A673 (cell line): ENCODE measurements at regions of chr2 and their contacts with region 1.

Region 1: DNA sequence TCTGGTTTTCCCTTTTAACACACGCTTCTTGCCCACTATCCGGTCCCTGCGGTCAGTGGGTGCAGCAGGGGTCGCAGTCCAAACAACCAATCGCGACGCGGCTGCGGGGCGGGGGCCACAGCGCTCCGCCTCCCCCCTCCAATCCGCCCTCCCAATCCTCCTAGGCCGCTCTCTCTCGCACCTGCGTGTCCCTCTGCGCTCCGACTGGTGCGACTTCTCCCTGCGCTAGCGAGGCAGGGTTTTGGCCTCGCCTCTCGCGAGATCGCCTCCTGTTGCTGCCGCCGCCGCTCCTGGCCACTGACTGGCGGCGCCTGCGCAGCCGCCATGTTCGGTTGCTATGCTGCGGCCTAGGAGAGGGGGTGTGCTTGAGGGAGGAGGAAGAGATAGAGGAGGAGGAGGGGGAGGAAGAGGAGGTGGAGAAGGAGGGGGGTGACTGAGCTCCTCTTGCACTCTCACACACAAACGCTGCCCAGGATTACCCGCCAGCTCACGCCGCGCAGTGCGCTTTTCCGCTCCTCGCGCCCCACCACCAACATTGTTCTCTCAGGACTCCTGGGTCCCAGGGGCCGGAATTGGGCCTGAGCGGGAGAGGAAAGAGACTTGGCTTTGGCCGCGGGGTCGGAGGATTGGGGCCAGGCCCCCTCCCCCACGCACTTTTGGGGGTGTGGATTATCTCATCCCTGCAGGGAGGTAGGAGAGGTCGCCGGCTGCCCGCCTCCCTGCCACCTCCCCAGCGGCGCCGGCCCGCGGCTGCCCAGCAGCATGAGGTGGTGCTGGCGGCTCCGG is at the start of gene PTPN4:
- DNase-seq: peak; percentile 99
- H3K4me3 ChIP-seq: peak within 1 kb of the TSS; percentile 84
- H3K27ac ChIP-seq: peak within 1 kb of the TSS; percentile 85
- H3K4me1 ChIP-seq: peaks cover 22% of the 10 kb centered on the region
- H3K27me3 ChIP-seq: no peaks in the 10 kb centered on the region
- CTCF ChIP-seq: no peak
- total RNA-seq, gene PTPN4: 42.2 and 51.5 TPM in 2 replicates

Region 2: DNA sequence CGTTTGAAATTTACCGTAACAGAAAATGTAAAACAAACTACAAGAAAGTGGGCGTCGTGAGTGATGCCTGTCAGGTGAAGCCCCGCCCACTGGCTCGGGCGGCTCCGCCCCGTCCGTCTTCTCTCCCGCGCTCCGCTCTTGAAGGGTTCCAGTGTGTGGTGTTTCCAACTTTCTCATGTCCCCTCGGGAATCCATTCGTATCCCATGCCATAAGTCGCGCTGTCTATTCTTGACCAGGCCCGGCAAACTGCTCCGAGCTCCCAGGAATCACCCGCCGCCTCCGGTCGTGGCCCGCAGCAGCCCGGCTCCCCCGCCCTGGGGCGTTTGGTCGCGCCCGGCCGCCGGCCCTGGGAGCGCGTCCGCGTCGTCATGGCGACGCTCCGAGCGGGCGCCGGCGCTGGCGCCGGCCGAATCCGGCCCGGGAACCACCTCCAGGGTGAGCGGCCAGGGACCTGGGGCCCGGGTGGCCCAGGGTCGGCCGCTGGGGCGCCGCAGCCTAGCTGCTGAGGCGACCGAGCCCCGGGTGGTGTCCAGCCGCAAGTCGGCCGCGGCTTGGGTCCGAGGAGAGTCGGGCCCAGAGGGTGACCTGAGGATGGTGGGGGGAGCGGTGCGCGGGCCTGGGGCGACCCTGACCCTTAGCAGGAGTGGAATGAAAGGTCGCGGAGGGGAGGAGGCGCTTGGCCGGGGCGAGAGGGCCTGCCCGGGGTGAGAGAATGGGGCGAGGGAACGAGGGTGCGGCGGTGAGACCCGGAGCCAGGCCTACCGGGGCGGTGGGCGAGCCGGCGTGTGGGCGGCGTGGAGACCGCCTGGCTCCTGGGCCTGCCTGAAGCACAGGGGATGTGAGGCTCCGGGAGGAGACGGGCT is 215.3 kb before region 1 on chr2 and contains the start of gene CFAP221:
- CTCF ChIA-PET with region 1: no interaction called
- POLR2A ChIA-PET with region 1: no interaction called
- intact Hi-C with region 1: no loop called
- DNase-seq: peak; percentile 89
- H3K4me3 ChIP-seq: peak within 1 kb of the TSS; percentile 70
- H3K27ac ChIP-seq: peak within 1 kb of the TSS; percentile 93
- H3K4me1 ChIP-seq: peaks cover 4% of the 10 kb centered on the region
- H3K27me3 ChIP-seq: no peaks in the 10 kb centered on the region
- CTCF ChIP-seq: no peak
- total RNA-seq, gene CFAP221: 1.1 and 1.5 TPM in 2 replicates

Region 3: DNA sequence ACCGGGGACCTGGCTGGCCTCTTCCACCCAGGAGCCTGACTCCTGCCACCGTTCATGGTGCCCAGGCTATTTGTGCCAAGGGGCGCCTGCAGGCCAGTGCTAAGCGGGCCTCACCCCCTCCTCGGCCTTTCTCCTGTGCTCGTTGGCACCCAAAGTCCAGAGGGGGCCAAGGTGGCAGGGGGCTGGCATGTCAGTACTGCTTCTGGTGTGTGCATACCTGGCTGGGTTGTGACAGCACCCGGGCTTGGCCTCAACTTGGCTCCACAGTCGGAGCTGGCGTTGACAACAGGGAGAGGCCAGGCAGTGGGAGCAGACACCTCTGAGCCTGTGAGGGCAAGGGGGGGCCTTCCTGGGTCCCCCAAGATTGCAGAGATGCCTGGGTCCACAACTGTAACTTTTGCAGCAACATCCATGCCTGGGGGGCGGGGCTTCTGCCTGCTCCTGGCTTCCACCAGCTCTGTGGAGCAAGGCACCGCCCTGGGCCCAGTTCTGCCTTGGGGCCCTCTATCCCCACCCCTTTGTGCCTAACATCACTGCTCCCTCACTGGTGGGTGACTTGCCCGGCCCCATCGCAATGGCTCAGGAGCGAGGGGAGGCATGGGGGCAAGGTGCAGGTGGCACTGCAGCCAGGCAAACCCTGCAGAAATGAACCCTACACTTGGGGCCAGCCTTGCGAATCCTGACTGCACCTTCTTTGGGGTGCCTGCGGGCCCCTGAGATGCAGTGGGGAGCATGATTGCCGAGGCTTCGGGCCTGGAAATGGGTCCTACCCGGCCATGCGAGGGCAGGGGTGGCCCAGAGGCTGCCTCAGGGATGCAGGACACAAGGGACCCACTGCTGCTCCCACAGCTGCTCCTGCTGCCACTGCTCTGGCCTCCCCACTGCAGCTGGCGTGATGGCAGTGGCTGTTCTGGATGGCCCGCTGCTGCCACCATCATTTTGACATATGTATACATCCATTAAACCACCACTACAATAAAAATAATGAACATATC is 36.0 kb after region 1 on chr2:
- CTCF ChIA-PET with region 1: no interaction called
- POLR2A ChIA-PET with region 1: no interaction called
- intact Hi-C with region 1: loop called (anchors 5 kb)
- DNase-seq: no peak
- H3K4me3 ChIP-seq: no peak overlapping the region
- H3K27ac ChIP-seq: no peak overlapping the region
- H3K4me1 ChIP-seq: peaks cover 6% of the 10 kb centered on the region
- H3K27me3 ChIP-seq: no peaks in the 10 kb centered on the region
- CTCF ChIP-seq: no peak

Region 4: DNA sequence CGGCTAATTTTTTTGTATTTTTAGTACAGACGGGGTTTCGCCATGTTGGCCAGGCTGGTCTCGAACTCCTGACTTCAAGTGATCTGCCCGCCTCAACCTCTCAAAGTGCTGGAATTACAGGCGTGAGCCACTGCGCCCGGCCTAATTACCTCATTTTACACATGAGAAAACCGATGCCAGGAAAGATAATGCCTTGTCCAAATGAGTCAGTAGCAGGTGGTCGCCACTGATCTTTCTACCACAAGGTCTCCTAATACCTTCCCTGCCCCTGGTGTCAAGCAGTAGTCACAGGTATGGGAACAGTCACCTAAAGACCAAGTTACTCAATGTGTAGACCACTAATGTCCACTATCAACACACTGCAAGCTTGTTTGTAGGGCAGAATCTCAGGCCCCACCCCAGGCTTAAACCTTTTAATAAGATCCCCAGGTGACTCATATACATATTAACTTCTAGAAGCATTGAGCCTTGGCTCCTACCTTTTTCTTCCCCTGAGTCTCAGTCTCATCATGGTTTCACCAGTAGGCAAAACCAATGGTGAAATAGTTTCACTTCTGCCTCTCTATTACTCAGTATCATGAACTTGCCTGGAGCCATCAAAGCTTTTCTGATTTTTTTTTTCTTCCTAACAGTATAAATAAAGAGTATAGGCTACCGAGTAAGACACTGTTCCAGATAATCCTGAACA is 246.3 kb after region 1 on chr2:
- CTCF ChIA-PET with region 1: no interaction called
- POLR2A ChIA-PET with region 1: no interaction called
- intact Hi-C with region 1: loop called (anchors 10 kb)
- DNase-seq: no peak
- H3K4me3 ChIP-seq: no peak overlapping the region
- H3K27ac ChIP-seq: no peak overlapping the region
- H3K4me1 ChIP-seq: no peaks in the 10 kb centered on the region
- H3K27me3 ChIP-seq: no peaks in the 10 kb centered on the region
- CTCF ChIP-seq: no peak

Region 5: DNA sequence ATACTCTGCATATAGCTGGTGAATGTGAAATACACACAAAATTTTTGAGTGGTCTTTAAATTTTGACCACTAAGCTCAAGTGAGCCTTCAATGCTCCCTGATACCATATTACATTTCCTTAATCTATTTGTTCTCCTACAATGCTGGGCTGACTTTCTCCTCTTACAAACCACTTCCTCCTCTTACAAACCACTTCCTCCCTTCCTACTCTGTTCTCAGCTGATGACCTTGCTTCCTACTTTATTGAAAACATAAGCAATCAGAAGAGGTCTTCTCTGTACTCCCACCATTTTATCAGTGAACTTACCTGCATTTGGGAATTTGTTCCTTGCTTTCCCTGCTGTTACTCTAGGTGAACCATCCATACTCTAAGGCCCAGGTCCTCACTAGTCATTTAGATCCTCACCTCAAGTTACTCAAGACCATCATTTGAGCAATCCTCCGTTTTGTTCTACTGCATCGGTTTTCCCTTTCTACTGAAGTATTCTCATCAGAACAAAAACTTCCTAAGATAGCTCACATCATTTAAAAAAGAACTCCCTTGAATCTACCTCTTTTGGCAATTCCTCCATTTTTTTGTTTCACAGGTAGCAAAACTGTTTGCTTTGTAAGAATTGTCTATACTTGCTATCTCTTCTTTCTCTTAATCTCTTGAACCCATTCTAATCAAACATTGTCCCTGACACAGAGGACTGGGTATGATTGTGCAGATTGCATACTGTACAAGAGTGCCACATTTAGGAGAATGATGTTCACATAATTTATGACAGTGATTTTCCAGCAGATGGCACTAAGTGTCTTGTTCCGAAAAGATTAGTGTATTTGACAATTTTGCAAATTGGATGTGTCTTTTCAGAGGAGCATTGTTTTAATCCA is 349.8 kb after region 1 on chr2:
- CTCF ChIA-PET with region 1: no interaction called
- POLR2A ChIA-PET with region 1: no interaction called
- intact Hi-C with region 1: loop called (anchors 10 kb)
- DNase-seq: peak; percentile 57
- H3K4me3 ChIP-seq: no peak overlapping the region
- H3K27ac ChIP-seq: no peak overlapping the region
- H3K4me1 ChIP-seq: no peaks in the 10 kb centered on the region
- H3K27me3 ChIP-seq: no peaks in the 10 kb centered on the region
- CTCF ChIP-seq: peak; percentile 74